AG04450 (cell line): ENCODE measurements at regions of chr12 and their contacts with region 1.

Region 1: DNA sequence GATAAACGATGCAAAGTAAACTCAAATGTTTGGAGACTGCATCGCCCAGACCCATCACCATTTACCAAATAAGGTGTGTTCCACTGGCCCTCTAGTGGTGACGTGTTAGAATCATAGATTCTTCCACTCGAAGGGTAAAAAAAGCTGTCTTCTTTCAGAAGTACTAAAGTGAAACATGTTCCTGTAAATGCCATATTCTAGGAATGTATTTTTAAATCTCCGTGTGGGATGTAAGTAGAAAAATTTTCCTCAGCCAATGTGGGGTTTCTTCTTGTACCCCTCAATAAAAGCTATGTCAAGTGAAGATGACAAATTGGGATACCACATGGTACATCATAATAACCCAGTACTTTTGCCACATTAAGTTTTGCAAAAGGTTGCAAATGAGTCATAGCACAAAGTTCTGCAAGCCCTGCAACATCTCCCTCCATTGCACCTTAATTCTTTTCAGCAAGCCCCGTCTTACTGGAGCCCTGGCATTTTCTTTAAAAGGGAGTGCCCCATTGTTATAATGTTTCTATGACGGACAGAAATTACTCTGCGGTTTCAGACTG is 100.8 kb downstream of the CCER1 start:
- DNase-seq: peak; percentile 13
- H3K4me3 ChIP-seq: no peak overlapping the region
- H3K27ac ChIP-seq: no peak overlapping the region
- H3K27me3 ChIP-seq: no peaks in the 10 kb centered on the region
- CTCF ChIP-seq: peak; percentile 86

Region 2: DNA sequence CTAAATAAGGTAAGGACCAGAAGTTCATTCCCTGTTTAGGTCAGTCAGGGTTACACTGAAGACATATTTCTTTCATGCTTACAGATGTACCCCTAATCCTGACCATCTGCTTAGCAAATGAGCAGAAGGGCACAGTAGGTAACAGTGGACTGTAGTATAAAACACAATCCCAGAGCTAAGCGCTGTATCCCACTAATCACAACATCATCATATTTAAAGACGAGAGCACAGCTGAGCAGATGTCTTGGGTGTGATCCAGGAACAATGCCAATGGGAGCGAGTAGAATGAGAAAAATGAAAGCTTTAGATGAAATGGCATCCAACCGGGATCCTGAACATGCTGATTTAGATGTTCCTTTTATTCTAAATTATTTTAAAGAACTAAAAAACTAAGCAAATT is 112.6 kb before region 1 on chr12:
- CTCF ChIA-PET with region 1: no interaction called
- POLR2A ChIA-PET with region 1: no interaction called
- DNase-seq: no peak
- H3K4me3 ChIP-seq: no peak overlapping the region
- H3K27ac ChIP-seq: no peak overlapping the region
- H3K27me3 ChIP-seq: no peaks in the 10 kb centered on the region
- CTCF ChIP-seq: no peak

Region 3: GRCh38 chr12:90836689-90837088 is 17.5 kb before region 1 on chr12:
- CTCF ChIA-PET with region 1: interaction called, 10 read pairs
- POLR2A ChIA-PET with region 1: no interaction called
- DNase-seq: no peak
- H3K4me3 ChIP-seq: no peak overlapping the region
- H3K27ac ChIP-seq: no peak overlapping the region
- H3K27me3 ChIP-seq: no peaks in the 10 kb centered on the region
- CTCF ChIP-seq: no peak

Region 4: DNA sequence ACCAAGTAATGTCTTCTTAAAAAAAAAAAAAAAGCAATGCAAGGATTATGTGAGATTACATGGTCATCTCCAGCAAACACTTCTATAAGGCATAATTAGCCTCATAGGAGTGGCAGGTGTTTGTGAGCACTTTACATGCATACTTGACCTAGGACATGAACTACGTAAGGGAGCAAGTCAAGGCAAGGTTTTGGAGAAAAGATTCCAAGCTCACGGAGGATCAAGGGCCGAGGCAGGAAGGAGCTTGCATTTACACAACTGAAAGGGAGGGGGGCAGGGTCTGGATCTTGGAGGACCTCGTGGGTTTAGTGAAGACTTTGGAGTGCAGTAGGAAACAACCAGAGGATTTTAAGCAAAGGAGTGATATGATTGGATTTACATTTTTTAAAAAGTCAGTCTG is 11.7 kb before region 1 on chr12:
- CTCF ChIA-PET with region 1: interaction called, 18 read pairs
- POLR2A ChIA-PET with region 1: no interaction called
- DNase-seq: no peak
- H3K4me3 ChIP-seq: no peak overlapping the region
- H3K27ac ChIP-seq: no peak overlapping the region
- H3K27me3 ChIP-seq: no peaks in the 10 kb centered on the region
- CTCF ChIP-seq: no peak

Region 5: DNA sequence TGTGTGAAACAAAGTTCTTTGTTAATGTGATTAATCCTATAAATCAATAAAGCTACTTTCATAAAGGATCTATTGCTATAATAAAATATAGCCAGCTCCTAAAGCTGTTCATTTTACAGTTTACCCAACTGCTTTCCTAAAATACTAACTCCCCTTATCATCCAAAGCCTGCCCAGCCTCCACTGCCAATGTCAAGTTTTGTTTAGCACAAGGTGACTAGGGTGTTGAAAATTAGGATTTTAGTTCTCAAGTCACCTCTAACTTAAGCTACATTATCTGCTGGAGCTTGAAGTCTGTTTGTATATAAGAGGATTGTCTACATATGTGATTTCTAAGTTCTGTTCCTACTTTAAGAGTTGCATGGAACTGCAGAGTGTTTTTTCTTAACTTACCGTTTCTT is 14.4 kb after region 1 on chr12:
- CTCF ChIA-PET with region 1: interaction called, 38 read pairs
- POLR2A ChIA-PET with region 1: no interaction called
- DNase-seq: no peak
- H3K4me3 ChIP-seq: no peak overlapping the region
- H3K27ac ChIP-seq: no peak overlapping the region
- H3K27me3 ChIP-seq: no peaks in the 10 kb centered on the region
- CTCF ChIP-seq: no peak